Heart left ventricle (tissue), 16 donors: ENCODE measurements at regions of chr16 and their contacts with region 1.

Region 1: DNA sequence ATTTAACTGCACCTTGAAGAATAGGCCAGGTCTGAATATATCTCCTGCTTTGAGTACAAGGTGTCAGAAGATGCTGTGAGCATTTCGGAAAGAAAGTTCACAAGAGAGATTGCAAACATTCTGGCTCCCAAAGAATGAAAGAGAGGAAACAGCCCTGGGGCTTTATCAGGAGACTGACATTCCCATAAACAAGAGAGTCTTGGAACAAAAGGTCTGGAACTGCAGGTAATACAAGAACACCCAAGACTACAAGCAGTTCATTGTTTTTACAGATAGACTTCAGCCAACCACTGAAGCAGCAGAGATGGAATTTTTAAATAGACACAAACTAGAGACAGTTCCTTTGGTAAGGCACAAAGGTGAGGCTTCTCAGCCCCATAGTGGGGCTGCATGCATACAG is 14.4 kb downstream of the HSD17B2 start:
- DNase-seq: no peak
- ATAC-seq: no peak
- H3K4me3 ChIP-seq: no peak overlapping the region
- H3K27ac ChIP-seq: no peak overlapping the region
- H3K4me1 ChIP-seq: no peaks in the 10 kb centered on the region
- H3K27me3 ChIP-seq: peaks cover 0 to 27% (median 3%) of the 10 kb centered on the region in 9 donors
- CTCF ChIP-seq: no peak
- POLR2A ChIP-seq: no peak

Region 2: GRCh38 chr16:81650982-81651562 is 398.4 kb before region 1 on chr16:
- intact Hi-C with region 1: no loop called
- DNase-seq: peak; percentile 81 to 87 (median 84)
- ATAC-seq: peak; percentile 81 to 95 (median 87)
- H3K4me3 ChIP-seq: peak overlapping the region in 5 of 12 donors; percentile 10 to 41 (median 34)
- H3K27ac ChIP-seq: peak overlapping the region in 10 of 12 donors; percentile 22 to 76 (median 60)
- H3K4me1 ChIP-seq: peaks cover 0 to 17% (median 0%) of the 10 kb centered on the region in 12 donors
- H3K27me3 ChIP-seq: no peaks in the 10 kb centered on the region
- CTCF ChIP-seq: no peak
- POLR2A ChIP-seq: no peak

Region 3: DNA sequence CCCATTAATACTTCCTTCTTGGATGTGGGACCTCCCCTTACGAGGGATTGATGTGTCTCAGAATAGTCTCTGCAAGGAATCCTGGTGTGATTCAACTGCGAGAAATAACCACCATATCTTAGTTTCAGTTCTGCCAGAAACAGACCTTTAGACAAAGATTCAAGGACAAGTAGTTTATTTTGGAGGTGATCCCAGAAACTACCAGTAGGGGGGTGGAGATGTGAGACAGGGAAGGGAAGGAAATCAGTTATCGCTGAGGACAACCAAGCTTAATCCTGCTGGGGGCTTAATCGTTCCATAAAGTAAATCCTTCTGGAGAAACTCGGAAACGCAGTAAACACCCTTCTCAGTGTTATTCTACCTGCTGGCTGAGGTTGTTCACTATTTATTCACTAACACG is 33.2 kb before region 1 on chr16:
- intact Hi-C with region 1: no loop called
- DNase-seq: no peak
- ATAC-seq: peak in 1 of 4 donors; percentile 47
- H3K4me3 ChIP-seq: peak overlapping the region in 1 of 12 donors; percentile 18
- H3K27ac ChIP-seq: no peak overlapping the region
- H3K4me1 ChIP-seq: peaks cover 0 to 5% (median 0%) of the 10 kb centered on the region in 12 donors
- H3K27me3 ChIP-seq: peaks cover 0 to 13% (median 3%) of the 10 kb centered on the region in 9 donors
- CTCF ChIP-seq: peak in 9 of 12 donors; percentile 17 to 50 (median 35)
- POLR2A ChIP-seq: no peak

Region 4: GRCh38 chr16:82074019-82074558 is 24.6 kb after region 1 on chr16:
- intact Hi-C with region 1: loop called in 1 of 10 experiments (anchors 2 kb)
- DNase-seq: no peak
- ATAC-seq: no peak
- H3K4me3 ChIP-seq: no peak overlapping the region
- H3K27ac ChIP-seq: no peak overlapping the region
- H3K4me1 ChIP-seq: no peaks in the 10 kb centered on the region
- H3K27me3 ChIP-seq: peaks cover 0 to 6% (median 0%) of the 10 kb centered on the region in 9 donors
- CTCF ChIP-seq: no peak
- POLR2A ChIP-seq: no peak

Region 5: GRCh38 chr16:82094942-82095540 is 45.6 kb after region 1 on chr16:
- intact Hi-C with region 1: no loop called
- DNase-seq: no peak
- ATAC-seq: no peak
- H3K4me3 ChIP-seq: no peak overlapping the region
- H3K27ac ChIP-seq: no peak overlapping the region
- H3K4me1 ChIP-seq: no peaks in the 10 kb centered on the region
- H3K27me3 ChIP-seq: peaks cover 0 to 6% (median 0%) of the 10 kb centered on the region in 9 donors
- CTCF ChIP-seq: no peak
- POLR2A ChIP-seq: no peak

Region 6: DNA sequence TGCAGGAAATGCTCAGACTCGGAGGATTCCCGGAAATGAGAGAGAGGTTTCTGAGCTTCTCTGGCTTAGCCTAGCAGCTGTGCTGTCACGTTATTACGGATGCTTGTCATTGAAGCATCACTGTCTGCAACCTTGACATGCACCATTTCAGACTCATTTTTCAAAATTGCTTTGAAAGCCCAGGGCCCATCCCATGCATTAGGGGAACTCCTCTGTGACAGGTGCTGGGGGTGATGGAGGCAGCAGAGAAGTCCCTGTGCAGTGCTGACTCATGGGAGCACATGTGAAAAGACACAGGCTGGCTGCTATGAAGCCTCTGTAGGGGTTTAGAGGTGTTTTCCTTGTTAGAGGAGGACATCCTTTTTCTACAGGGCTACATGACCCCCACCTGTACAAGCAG is 334.5 kb after region 1 on chr16:
- intact Hi-C with region 1: no loop called
- DNase-seq: no peak
- ATAC-seq: no peak
- H3K4me3 ChIP-seq: no peak overlapping the region
- H3K27ac ChIP-seq: no peak overlapping the region
- H3K4me1 ChIP-seq: no peaks in the 10 kb centered on the region
- H3K27me3 ChIP-seq: no peaks in the 10 kb centered on the region
- CTCF ChIP-seq: no peak
- POLR2A ChIP-seq: no peak